Endothelial cell of umbilical vein (primary cell): ENCODE measurements at regions of chr10 and their contacts with region 1.

Region 1: GRCh38 chr10:75430000-75430763 is 1.2 kb upstream of the LRMDA start:
- DNase-seq: peak; percentile 45
- H3K4me3 ChIP-seq: no peak overlapping the region
- H3K27ac ChIP-seq: no peak overlapping the region
- H3K4me1 ChIP-seq: peaks cover 28% of the 10 kb centered on the region
- H3K27me3 ChIP-seq: peaks cover 0 to 4% of the 10 kb centered on the region in 2 experiments
- CTCF ChIP-seq: no peak
- POLR2A ChIP-seq: no peak

Region 2: DNA sequence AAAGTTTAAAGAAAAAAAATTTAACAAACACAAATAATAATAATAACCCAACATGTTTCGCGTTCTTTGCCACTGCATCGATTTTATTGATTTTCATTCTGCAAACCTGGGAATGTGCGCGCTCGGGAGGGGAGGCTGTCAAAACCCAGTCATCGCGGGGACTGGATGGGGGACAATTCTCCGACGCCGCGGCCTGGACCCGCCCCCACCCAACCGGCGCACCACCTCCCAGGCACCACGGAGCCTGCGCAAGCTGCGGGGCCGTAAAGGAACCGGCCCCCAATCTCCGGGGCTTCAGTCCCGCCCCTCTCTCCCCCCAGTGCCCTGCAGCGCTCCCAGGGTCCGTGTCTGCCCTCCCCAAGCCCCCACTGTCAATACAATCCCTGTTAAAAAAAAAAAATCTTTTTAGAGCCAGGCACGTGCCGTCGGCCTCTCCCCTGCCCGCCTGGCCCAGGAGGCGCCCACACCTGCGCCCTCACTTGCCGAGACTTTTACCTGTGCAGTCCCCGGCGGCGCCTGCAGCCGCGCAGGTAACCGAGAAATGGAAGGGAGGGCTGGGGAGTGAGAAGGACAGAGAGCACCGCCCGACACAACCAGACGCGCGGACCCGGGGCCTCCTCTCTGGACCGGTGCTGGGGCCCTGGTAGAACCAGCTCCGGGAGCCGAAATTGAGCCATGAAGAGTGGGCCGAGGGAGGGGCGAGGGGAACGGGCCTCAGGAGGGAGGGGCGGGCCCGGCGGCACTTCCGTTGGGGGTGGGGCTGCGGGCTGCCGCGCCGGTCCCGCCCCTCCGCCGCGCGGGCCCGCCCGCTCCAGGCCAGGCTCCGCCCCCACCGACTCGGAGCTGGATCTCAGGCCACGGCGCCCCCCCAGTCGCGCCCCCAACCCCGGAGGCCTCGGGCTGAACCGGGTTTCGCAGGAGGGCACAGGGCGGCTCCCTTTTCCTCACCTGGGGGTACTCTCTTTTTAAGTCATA is 21.0 kb before region 1 on chr10:
- CTCF ChIA-PET with region 1: no interaction called
- POLR2A ChIA-PET with region 1: no interaction called
- dilution Hi-C with region 1: no loop called
- intact Hi-C with region 1: loop called (anchors 1 kb)
- DNase-seq: no peak
- H3K4me3 ChIP-seq: peak overlapping the region; percentile 13 to 59 (median 42)
- H3K27ac ChIP-seq: no peak overlapping the region
- H3K4me1 ChIP-seq: peaks cover 4% of the 10 kb centered on the region
- H3K27me3 ChIP-seq: peaks cover 35 to 72% of the 10 kb centered on the region in 2 experiments
- CTCF ChIP-seq: no peak
- POLR2A ChIP-seq: no peak